Panc1 (cell line): ENCODE measurements at regions of chr10 and their contacts with region 1.

Region 1: DNA sequence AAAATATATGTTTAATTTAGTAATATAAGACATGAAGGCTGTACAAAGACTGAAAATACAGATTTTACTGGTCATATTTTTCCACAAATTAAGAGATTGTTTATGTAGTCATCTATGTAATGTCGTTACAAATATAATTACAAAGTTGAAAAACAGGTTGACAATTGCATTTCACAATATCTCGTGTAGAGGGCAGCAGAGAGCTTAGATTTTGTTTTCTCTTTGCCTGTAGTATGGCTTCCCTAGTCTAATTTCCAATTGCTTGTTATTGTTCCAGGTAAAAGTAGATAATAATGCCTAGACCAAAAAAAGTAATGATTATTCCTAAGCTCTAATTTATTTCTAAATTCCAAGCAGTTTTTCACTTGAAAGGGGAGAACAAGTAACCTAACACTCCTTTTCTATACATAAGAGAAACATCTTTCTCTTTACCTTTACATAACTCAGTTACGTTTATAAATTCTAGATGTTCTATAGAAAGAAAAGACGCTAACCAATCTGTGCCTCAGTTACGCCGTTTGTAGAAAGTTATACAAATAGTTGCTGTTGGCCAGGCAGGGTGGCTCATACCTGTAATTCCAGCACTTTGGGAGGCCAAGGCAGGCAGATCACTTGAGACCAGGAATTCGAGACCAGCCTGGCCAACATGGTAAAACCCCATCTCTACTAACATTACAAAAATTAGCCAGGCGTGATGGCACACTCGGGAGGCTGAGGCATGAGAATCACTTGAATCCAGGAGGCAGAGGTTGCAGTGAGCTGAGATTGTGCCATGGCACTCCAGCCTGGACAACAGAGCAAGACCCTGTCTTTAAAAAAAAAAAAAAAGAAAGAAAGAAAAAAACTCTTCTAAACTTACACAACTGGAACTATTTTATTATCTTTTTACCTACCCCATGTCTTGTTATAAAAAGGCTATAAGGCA is 30.0 kb downstream of the NET1 start:
- DNase-seq: no peak
- ATAC-seq: no peak
- H3K4me3 ChIP-seq: no peak overlapping the region
- H3K27ac ChIP-seq: no peak overlapping the region
- H3K4me1 ChIP-seq: peaks cover 8% of the 10 kb centered on the region
- H3K27me3 ChIP-seq: no peaks in the 10 kb centered on the region
- CTCF ChIP-seq: peak; percentile 62; the same call in 1 of the 2 replicates

Region 2: DNA sequence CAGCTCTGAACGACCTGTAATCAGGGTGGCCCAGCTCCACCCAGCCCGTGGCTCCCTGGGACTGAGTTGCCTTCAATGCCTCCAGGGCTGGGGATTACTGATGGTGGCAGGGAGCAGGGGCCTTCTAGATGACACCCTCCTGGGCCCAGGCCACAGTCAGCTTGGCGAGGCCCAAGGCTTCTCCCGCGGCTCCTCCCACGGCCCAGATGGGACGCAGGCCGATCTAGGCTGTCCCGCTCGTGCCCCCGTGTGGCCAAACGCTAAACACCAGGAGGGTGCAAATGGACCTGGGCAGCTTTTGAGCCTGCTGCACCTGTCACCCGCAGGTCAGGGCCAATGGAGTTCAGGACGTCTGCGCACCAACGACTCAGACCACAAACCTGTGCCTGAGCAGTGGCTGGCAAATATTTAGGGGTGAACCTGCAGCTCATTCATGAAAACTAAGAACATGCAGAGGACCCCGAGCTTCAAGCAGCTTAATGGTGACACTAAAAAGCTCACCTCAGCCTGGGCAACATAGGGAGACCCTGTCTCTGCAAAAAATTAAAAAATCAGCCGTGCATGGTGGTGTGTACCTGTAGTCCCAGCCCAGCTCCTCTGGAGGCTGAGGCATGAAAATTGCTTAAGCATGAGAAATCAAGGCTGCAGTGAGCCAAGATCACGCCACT is 180.9 kb after region 1 on chr10:
- CTCF ChIA-PET with region 1: interaction called, 11 read pairs
- POLR2A ChIA-PET with region 1: interaction called, 3 read pairs
- in situ Hi-C with region 1: no loop called
- intact Hi-C with region 1: loop called (anchors 2 kb)
- DNase-seq: no peak
- ATAC-seq: peak; percentile 98
- H3K4me3 ChIP-seq: no peak overlapping the region
- H3K27ac ChIP-seq: no peak overlapping the region
- H3K4me1 ChIP-seq: no peaks in the 10 kb centered on the region
- H3K27me3 ChIP-seq: no peaks in the 10 kb centered on the region
- CTCF ChIP-seq: peak; percentile 88